ENCODE measurements at regions of chr10 and their contacts with region 1.

Region 1: DNA sequence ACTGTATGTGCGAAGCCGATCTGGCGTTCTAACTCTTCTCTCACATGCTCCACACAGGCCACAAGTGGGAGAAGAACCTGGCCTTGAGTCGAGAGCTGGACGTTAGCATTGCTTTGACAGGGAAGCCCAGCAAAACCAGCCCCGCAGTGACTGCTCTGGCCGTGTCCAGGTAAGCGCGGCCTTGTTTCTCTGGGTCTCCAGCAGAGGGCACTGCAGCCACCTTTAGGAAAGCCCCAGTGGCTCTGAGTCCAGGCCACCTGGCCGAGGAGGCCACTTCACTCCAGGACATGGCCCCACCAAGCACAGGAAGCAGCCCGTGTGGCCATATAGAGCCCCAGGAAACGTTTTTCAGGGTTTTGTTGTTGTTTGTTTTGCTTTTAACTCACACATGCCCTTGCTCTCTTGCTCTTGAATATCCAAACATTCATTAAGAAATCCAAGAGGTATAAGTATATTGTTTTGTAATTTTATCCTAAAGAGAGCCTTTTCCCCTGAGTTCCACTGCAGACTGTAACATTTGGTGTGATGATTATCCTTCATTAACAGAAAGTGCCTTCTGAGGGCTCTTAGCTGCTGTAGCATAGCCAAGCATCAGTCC is 41.8 kb upstream of the LRRC18 start:
- DNase-seq: peak; percentile 57
- H3K4me3 ChIP-seq: no peak overlapping the region
- H3K27ac ChIP-seq: no peak overlapping the region
- H3K4me1 ChIP-seq: peaks cover 6% of the 10 kb centered on the region
- H3K27me3 ChIP-seq: no peaks in the 10 kb centered on the region
- CTCF ChIP-seq: peak; percentile 92

Region 2: DNA sequence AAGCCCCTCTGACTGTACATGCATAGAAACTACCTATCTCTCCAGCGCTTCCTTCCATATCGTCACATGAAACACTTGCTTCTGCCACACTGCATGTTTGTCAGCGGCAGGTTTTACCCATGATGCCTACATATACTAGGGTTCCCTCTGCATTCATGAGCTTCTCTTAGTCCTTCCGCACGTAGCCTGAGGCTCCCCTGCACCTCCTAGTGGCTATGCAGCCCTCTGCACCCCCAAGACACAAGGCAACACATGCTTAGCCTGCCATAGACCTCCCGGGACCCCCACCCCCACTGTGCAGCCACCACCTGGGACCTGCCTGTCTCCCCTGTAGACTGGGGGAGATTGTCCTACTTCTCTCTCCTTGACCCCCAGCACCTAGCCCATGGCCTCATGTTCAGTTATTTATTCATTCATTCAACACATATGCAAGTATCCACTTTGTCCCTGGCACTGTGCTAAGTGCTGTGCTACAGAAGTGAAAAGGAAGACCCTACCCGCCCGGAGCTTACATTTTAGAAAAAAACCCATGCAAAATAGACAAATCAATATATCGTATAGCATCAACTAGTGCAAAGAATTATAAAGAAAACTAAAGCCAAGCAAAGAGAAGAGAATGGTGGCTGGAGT is 183.3 kb after region 1 on chr10:
- intact Hi-C with region 1: loop called (anchors 10 kb)
- DNase-seq: no peak
- H3K4me3 ChIP-seq: no peak overlapping the region
- H3K27ac ChIP-seq: no peak overlapping the region
- H3K4me1 ChIP-seq: peaks cover 42% of the 10 kb centered on the region
- H3K27me3 ChIP-seq: no peaks in the 10 kb centered on the region
- CTCF ChIP-seq: peak; percentile 77

Measured in left ventricle myocardium inferior (tissue), 1 donor.